ENCODE measurements at regions of chr9 and their contacts with region 1.

Region 1: GRCh38 chr9:115035841-115036612 is 81.9 kb downstream of the TNC start:
- DNase-seq: no peak

Region 2: GRCh38 chr9:115099901-115100300 is 63.9 kb after region 1 on chr9:
- intact Hi-C with region 1: loop called (anchors 10 kb)
- DNase-seq: peak in 3 of 10 donors; percentile 20 to 69 (median 45)